ENCODE measurements at regions of chr7 and their contacts with region 1.

Region 1: DNA sequence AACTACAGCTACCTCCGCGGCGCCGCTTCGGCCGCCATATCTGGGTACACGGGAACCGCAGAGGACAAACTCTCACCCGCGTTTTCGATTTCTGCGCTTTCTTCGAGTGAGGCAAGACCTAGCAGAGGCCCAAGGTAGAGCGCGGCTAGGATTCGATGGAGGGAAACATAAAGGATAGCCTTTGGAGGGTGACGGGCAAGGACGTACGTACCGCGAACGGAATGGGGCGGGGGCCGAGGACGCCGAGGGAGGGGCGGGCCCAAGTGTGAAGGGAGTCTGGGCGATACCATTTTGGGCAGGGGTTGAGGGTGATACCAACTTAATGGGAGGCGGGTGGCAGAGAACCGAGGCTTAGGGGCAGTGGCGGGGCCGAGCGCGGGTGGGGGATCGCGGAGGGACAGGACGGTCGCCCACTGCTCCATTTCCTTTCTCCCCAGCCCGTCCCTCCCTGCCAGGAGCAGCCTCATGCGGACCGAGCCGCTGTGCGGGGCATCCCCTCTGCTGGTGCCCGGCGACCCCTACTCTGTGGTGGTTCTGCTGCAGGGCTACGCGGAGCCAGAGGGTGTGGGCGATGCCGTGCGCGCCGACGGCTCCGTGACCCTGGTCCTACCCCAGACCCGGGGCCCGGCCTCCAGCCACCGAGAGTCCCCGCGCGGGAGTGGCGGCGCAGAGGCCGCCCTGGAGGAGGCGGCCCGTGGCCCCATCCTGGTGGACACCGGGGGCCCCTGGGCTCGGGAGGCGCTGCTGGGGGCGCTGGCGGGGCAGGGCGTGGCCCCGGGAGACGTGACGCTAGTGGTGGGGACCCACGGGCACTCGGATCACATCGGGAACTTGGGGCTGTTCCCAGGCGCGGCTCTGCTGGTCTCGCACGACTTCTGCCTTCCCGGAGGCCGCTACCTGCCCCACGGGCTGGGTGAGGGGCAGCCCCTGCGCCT is at the start of gene MBLAC1:
- DNase-seq: peak; percentile 95
- total RNA-seq, gene MBLAC1: 1.5 TPM

Region 2: DNA sequence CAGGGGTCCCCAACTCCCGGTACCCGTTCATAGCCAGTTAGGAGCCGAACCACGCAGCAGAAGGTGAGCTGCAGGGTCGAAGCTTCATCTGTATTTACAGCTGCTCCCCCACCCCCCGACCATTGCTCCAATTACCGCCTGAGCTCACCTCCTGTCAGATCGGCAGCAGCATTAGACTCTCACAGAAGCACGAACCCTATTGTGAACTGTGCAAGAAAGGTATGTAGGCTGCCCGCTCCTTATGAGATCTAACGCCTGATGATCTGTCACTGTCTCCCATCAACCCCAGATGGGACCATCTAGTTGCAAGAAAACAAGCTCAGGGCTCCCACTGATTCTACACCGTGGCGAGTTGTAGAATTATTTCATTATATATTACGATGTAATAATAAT is 136.7 kb before region 1 on chr7:
- intact Hi-C with region 1: loop called (anchors 5 kb)
- DNase-seq: no peak

Region 3: DNA sequence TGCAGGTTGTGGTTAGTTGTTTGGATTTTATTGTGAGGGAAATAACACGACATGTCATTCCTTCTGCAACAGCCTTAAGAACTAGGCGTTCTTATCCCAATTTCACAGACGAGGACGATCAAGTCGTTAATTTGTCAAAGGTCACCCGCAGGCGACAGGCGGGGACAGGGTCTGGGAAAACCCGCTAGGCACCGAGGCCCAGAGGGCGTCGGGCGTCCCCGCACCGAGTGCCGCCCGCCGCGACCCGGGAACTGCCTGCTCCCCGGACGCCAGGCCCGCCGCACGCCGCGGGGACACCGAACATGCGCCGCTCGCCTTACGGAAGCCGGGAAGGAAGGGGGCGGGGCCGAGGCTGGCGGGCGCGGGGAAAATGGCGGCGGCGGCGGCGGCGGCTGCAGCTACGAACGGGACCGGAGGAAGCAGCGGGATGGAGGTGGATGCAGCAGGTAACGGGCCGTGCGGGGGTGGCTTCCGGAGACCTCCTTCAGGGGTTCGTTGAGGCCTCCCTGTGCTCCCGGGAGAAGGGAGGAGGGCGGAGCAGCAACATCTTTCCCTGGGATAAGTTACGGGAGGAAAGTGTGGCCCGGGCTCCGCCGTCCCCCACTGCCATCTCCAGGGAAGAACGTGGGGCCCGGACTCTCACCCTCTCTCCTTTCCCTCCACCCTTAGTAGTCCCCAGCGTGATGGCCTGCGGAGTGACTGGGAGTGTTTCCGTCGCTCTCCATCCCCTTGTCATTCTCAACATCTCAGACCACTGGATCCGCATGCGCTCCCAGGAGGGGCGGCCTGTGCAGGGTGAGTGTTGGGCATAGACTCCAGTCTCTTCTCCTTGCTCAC is 38.4 kb before region 1 on chr7 and contains the start of gene COPS6:
- intact Hi-C with region 1: loop called (anchors 5 kb)
- DNase-seq: peak; percentile 92
- total RNA-seq, gene COPS6: 86.4 TPM

Region 4: DNA sequence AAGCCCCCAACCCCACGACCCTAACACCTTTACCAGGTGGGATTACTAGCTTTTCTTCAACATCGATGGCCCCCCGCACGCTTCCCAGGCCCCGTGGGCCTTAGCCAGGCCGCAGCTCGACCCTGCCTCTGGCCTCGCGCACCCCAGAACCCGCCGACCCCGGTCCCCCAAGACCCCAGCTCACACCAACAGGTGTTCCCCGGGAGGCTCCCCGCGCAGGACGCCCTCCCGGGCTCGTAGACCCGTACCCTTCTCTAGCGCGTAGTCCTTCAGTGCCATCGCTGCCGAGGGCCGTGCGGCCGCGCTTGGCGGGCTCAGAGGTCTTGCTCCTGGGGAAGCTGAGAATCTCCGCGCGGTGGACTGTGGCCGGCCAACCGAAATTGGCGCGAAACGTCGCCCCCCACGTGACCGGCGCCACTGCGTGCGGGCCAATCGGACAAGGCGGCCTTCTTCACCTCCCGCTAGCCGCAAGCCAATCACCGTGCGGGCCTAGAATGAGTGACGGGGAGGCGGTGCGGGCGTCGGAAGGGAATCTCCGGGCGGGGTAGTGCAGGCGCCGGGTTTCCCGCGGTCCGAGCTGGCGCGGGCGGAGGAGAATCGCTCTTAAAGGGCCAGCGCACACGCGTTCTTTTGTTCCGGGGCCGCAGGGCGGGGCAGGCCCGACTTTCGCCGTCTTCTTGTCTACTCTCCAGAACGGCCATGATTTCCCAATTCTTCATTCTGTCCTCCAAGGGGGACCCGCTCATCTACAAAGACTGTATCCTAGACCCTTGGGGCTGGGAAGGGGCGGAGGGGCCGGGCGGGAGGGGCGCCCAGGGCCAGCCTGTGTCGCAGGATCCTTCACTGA is 26.0 kb before region 1 on chr7 and contains the starts of genes AP4M1 and MCM7:
- intact Hi-C with region 1: loop called (anchors 2 kb)
- DNase-seq: peak; percentile 100
- total RNA-seq, gene AP4M1: 13.7 TPM
- total RNA-seq, gene MCM7: 20.5 TPM